ENCODE measurements at regions of chr14 and their contacts with region 1.

Region 1: GRCh38 chr14:60248697-60249318 is at the start of gene PPM1A:
- DNase-seq: peak; percentile 95
- ATAC-seq: peak; percentile 79
- H3K4me3 ChIP-seq: peak within 1 kb of the TSS; percentile 81
- H3K27ac ChIP-seq: peak within 1 kb of the TSS; percentile 98
- H3K4me1 ChIP-seq: peaks cover 4% of the 10 kb centered on the region
- H3K27me3 ChIP-seq: no peaks in the 10 kb centered on the region; the same call in 1 of the 2 replicates
- CTCF ChIP-seq: no peak
- POLR2A ChIP-seq: peak; percentile 78; the same call in 1 of the 2 replicates
- RAD21 ChIP-seq: no peak
- total RNA-seq, gene PPM1A: 14.3 and 22.8 TPM in 2 replicates

Region 2: GRCh38 chr14:60091550-60092530 is 157.0 kb before region 1 on chr14 and contains the start of gene PCNX4:
- CTCF ChIA-PET with region 1: no interaction called
- POLR2A ChIA-PET with region 1: no interaction called
- dilution Hi-C with region 1: no loop called
- in situ Hi-C with region 1: no loop called
- intact Hi-C with region 1: loop called (anchors 5 kb)
- DNase-seq: peak; percentile 98
- ATAC-seq: peak; percentile 89
- H3K4me3 ChIP-seq: peak within 1 kb of the TSS; percentile 68
- H3K27ac ChIP-seq: peak within 1 kb of the TSS; percentile 97
- H3K4me1 ChIP-seq: peaks cover 9% of the 10 kb centered on the region
- H3K27me3 ChIP-seq: no peaks in the 10 kb centered on the region
- CTCF ChIP-seq: no peak
- POLR2A ChIP-seq: peak; percentile 96
- RAD21 ChIP-seq: no peak
- total RNA-seq, gene PCNX4: 128 and 151 TPM in 2 replicates

Region 3: DNA sequence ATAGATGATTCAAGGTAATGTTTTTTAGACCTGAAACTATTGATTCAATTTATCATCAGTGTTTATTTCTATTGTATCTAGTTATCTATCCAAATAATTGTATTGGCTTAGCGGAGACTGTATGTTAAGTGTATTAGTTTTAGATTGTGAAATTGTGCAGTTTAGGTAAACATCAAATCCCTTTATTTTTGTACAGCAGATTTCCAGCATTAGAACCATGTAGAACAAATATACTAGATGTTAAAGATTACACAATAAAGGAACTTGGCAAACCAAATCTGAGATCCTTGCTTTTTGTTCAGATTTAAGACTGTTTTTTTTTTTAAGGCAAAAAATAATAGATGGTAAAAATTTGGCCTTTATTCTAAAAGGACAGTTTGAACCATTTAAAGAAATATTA is 39.5 kb after region 1 on chr14:
- CTCF ChIA-PET with region 1: interaction called, 3 read pairs
- POLR2A ChIA-PET with region 1: no interaction called
- dilution Hi-C with region 1: no loop called
- in situ Hi-C with region 1: no loop called
- intact Hi-C with region 1: loop called (anchors 5 kb)
- DNase-seq: no peak
- ATAC-seq: no peak
- H3K4me3 ChIP-seq: no peak overlapping the region
- H3K27ac ChIP-seq: no peak overlapping the region
- H3K4me1 ChIP-seq: no peaks in the 10 kb centered on the region
- H3K27me3 ChIP-seq: no peaks in the 10 kb centered on the region
- CTCF ChIP-seq: no peak
- POLR2A ChIP-seq: no peak
- RAD21 ChIP-seq: no peak

Region 4: DNA sequence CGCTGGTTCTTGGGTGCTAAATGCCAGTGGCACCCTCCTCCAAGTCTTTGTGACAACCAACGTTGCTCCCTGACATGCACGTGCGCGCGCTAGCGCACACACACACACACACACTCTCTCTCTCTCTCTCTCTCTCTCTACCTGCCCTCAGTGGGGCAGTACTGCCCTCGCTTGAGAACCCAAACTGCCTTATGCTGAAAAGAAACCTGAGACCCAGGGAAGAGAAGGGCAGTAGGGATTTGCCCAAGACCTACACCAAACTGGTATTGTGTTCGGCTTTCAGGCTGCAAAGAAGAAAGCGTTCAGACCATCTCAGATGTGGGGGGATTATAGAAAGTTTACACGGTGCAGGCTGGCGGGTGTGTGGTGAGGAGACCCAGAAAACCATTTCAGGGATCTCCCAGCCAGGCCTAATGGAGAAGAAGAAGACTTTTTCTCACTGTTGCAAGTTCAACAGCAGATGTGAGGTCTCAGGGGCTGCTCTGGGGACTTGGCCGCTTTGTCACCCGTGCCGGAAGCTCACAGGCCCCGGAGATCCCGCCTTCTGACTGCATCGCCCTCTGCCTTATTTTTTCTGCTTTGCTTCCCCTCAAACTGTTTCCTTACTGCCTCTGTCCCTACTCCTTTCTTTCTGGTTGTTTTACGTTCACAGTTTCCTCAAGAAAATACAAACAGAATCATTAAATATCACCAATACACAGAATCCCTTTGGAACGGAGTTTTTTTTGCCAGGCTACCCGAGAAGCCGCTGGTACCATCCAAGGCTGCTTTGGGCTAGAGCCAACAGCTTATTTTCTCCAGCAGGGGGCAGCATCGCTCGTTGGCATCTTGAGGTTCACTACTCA is 82.6 kb after region 1 on chr14:
- CTCF ChIA-PET with region 1: no interaction called
- POLR2A ChIA-PET with region 1: interaction called, 5 read pairs
- dilution Hi-C with region 1: no loop called
- in situ Hi-C with region 1: no loop called
- intact Hi-C with region 1: loop called (anchors 5 kb)
- DNase-seq: peak; percentile 37
- ATAC-seq: peak; percentile 72
- H3K4me3 ChIP-seq: peak overlapping the region; percentile 36
- H3K27ac ChIP-seq: no peak overlapping the region
- H3K4me1 ChIP-seq: no peaks in the 10 kb centered on the region; the same call in 1 of the 2 replicates
- H3K27me3 ChIP-seq: peaks cover 28% of the 10 kb centered on the region
- CTCF ChIP-seq: peak; percentile 62
- POLR2A ChIP-seq: no peak
- RAD21 ChIP-seq: peak; percentile 48

Region 5: DNA sequence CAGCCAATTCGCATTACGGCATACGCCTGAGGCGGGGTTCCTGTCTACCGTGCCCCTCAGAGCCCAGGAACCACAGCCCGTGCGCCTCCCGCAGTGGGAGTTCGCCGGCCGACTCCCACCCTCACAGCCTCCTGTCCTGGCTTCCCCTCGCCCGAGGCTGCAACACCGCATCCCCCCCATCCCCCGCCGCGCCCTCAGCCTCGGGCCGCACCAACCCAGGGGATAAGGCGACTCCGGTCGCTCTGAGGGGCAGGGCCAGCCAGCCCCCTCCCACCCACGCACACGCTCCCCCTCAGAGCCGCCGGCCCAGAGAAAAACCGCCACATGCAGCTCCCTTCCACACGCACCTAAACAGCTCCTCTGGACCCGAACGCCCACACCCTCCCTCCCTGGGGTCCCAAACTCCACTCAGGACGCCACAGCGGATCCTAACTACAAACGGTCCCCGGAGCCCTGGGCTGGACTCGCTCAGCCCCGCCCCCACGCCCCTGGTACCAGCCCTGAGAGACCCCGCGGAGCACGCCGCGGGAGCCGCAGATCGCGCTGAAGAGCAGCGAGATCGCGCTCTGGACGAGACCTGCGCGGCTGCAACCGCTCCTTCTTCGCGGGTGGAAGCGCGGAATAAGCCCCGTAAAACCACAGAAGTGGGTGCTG is 236.9 kb after region 1 on chr14 and contains the start of gene C14orf39:
- CTCF ChIA-PET with region 1: no interaction called
- POLR2A ChIA-PET with region 1: no interaction called
- dilution Hi-C with region 1: no loop called
- in situ Hi-C with region 1: no loop called
- intact Hi-C with region 1: loop called (anchors 5 kb)
- DNase-seq: peak; percentile 65
- ATAC-seq: peak; percentile 97
- H3K4me3 ChIP-seq: peak within 1 kb of the TSS; percentile 82
- H3K27ac ChIP-seq: peak within 1 kb of the TSS; percentile 68; the same call in 1 of the 2 replicates
- H3K4me1 ChIP-seq: no peaks in the 10 kb centered on the region
- H3K27me3 ChIP-seq: peaks cover 11% of the 10 kb centered on the region
- CTCF ChIP-seq: no peak
- POLR2A ChIP-seq: peak; percentile 38; the same call in 1 of the 2 replicates
- RAD21 ChIP-seq: no peak
- total RNA-seq, gene C14orf39: 0.28 and 0.36 TPM in 2 replicates

Region 6: DNA sequence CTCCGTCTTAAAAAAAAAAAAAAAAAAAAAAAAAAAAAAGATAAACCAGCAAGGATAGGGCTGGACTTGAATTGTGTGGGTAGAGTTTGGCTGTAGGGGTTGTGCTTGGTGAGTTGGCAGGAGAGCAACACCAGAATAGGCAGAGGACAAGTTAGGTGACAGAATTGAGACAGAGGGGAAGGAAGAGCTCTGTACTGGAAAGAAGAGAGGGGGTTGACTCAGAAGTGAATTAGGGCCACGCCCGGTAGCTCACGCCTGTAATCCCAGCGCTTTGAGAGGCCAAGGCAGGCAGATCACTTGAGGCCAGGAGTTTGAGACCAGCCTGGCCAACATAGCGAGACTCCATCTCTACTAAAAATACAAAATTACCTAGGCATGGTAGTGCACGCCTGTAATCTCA is 1038.4 kb after region 1 on chr14:
- CTCF ChIA-PET with region 1: interaction called, 3 read pairs
- POLR2A ChIA-PET with region 1: interaction called, 6 read pairs
- dilution Hi-C with region 1: no loop called
- in situ Hi-C with region 1: no loop called
- intact Hi-C with region 1: loop called (anchors 2 kb)
- DNase-seq: no peak
- ATAC-seq: no peak
- H3K4me3 ChIP-seq: no peak overlapping the region
- H3K27ac ChIP-seq: no peak overlapping the region
- H3K4me1 ChIP-seq: no peaks in the 10 kb centered on the region
- H3K27me3 ChIP-seq: peaks cover 5% of the 10 kb centered on the region
- CTCF ChIP-seq: no peak
- POLR2A ChIP-seq: no peak
- RAD21 ChIP-seq: no peak